ENCODE measurements at regions of chr5 and their contacts with region 1.

Region 1: GRCh38 chr5:141968914-141969608 is at the start of gene RNF14:
- DNase-seq: peak; percentile 97 to 98
- ATAC-seq: peak; percentile 99
- H3K4me3 ChIP-seq: peak within 1 kb of the TSS; percentile 74 to 77
- H3K27ac ChIP-seq: peak within 1 kb of the TSS; percentile 86 to 91
- H3K4me1 ChIP-seq: peaks cover 0 to 3% of the 10 kb centered on the region in 2 donors
- H3K27me3 ChIP-seq: no peaks in the 10 kb centered on the region
- total RNA-seq, gene RNF14: 53.0 to 54.6 TPM

Region 2: DNA sequence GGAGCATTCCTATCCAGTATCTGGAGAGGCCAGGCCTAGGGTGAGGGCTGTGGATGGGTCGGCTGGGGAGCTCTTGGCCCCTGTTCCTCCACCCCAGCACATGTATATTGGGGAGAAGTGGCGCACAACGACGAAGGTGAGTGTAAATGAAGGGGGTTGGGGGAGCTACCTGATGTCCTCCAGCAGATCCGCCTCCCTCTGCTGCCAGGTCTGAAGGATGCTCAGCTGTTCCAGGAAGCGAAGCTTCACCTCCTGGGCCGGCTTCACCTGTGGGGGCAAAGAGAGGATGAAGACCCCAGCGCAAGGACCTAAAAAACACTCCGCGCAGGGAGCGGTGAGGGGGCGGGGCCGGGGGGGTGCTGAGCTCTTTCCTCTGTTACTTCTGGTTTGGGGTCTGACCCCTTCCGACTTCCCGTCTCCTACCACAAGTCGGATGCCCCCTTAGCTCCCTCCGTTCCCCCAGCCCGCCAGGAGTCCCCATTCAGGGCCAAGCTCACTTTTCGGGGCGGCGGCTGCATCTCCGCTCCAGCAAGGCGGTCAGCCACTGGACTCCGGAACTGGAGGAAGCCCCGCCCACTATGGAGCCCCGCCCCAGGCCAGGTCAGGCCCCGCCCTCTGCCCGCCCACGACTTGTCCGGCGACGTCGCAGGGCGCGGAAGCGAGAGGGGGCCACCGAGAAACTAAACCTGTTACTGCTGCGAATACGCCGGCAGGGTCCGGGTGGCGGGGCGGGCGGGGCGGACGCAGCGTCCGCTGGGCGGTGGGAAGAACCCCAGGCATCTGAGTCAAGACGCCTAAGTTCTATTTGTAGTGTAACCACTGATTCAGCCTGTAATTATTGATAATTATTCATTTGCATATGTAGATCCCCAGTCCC is 318.0 kb before region 1 on chr5 and contains the start of gene FCHSD1:
- intact Hi-C with region 1: no loop called
- DNase-seq: peak; percentile 92 to 97
- ATAC-seq: peak; percentile 96
- H3K4me3 ChIP-seq: peak within 1 kb of the TSS; percentile 73 to 92
- H3K27ac ChIP-seq: no peak within 1 kb of the TSS
- H3K4me1 ChIP-seq: no peaks in the 10 kb centered on the region
- H3K27me3 ChIP-seq: no peaks in the 10 kb centered on the region
- total RNA-seq, gene FCHSD1: 33.1 to 47.3 TPM

Region 3: DNA sequence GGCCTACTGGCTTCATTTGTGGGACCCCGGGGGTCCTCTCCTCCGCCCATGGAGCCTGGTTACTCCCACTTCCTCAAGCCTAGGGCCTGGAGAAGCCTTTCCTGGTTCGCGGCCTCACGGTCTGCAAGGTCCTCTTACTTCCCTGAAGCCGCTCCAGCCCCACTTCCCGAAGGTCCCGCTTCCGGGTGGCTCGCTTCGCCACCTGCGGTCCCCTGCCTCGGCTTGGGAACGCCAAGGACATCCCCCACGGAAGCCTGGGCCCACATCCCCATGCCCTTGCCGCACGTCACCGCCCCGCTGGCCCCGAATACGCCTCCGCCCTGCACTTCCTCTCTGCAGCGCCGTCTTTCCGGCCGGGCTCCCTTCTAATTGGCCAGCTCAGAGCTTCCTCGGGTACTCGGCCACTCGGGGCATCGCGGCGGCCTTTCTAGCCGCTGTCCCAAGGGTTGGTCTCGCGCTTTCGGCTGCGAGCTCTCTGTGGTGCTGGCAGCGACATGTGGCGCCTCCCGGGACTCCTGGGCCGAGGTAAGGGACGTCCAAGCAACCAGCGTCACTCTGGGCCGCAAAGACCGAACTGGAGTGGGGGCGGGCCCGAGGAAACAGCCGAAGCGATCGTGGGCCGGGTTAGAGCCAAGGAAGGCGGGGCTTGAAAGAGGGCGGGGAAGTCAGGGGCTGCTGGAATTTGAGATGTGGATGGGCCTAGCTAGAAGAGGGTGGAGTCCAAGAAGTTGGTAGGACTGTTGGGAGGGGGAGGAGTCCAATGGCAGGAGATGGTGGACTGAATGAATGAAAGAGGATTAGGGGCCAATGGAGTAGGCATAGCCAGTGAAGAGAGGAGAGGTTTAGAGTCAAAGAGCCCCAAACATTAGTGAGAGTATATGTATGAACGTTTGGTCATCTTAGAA is 45.4 kb before region 1 on chr5 and contains the start of gene DELE1:
- intact Hi-C with region 1: loop called in 1 of 2 experiments (anchors 5 kb)
- DNase-seq: peak; percentile 98
- ATAC-seq: peak; percentile 98
- H3K4me3 ChIP-seq: peak within 1 kb of the TSS; percentile 27 to 49
- H3K27ac ChIP-seq: peak within 1 kb of the TSS; percentile 71 to 90
- H3K4me1 ChIP-seq: no peaks in the 10 kb centered on the region
- H3K27me3 ChIP-seq: no peaks in the 10 kb centered on the region
- total RNA-seq, gene DELE1: 75.5 to 100 TPM

Region 4: GRCh38 chr5:141940695-141941271 is 28.3 kb before region 1 on chr5:
- intact Hi-C with region 1: no loop called
- DNase-seq: peak in 1 of 2 donors; percentile 77
- ATAC-seq: peak; percentile 37
- H3K4me3 ChIP-seq: no peak overlapping the region
- H3K27ac ChIP-seq: peak overlapping the region; percentile 46 to 80
- H3K4me1 ChIP-seq: no peaks in the 10 kb centered on the region
- H3K27me3 ChIP-seq: no peaks in the 10 kb centered on the region

Measured in aorta (tissue), 5 donors.